Ovary (tissue), 10 donors: ENCODE measurements at regions of chr13 and their contacts with region 1.

Region 1: DNA sequence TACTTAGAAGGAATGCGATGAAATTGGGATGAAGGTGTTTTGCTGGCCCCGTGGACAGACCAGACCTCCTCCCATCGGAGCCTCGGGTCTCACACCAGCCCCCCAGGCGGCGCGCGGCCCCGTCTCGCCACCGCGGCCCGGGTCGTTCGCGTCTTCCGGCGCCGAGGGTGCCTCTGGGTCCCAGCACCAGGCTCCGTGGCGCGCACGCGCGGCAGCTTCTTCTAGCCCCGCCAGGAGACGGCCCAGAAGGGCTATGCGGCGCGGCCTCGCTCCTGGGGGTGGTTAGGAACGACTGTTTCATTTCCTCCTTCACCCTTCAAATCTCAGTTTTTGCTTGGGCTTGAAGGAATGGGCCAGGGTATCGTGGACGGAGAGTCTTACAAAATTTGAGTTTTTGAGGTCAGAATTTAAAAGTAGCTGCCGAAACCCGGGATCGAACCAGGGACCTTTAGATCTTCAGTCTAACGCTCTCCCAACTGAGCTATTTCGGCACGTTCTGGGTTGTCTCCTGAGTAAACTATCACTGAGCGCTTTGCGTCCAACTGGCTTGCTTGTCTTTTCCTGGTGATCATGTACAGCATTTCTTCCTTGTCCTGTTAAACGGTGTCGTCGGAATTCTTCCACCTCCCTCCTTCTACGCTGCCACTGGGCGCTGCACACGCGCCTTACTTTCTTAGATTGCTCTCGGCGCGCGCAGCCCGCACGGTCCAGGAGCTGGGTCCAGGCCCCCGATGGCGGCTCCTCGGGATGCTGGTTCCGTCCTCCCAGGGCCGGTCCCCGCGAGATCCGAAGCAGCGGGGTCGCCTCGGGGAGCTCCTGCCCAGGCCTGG is 46.5 kb downstream of the TGDS start:
- DNase-seq: peak; percentile 90 to 94 (median 93)
- H3K4me3 ChIP-seq: peak overlapping the region; percentile 79
- H3K27ac ChIP-seq: peak overlapping the region; percentile 85 to 98
- H3K4me1 ChIP-seq: no peaks in the 10 kb centered on the region
- H3K27me3 ChIP-seq: no peaks in the 10 kb centered on the region
- CTCF ChIP-seq: peak in 1 of 3 donors; percentile 18
- EP300 ChIP-seq: no peak
- POLR2A ChIP-seq: peak; percentile 29

Region 2: DNA sequence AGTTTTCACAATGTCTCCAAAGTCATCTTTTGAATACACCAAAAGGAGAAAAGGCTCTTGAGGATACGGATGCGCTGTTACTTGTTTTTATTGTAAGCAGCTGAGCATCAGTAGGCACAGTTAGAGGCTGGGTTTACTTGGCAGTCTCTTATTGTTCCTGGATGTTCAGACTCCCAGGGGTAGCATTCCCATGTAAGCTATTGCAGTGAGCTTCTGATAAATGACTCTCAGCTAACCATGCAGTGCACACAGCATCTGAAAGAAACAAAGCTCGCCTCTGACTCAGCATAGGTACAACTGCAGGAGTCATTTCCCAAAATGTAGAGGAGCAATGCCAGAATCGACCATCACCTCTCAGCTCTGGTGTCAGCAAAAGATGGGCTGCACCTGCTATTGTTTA is 154.7 kb before region 1 on chr13:
- intact Hi-C with region 1: no loop called
- DNase-seq: no peak
- H3K4me3 ChIP-seq: no peak overlapping the region
- H3K27ac ChIP-seq: no peak overlapping the region
- H3K4me1 ChIP-seq: no peaks in the 10 kb centered on the region
- H3K27me3 ChIP-seq: no peaks in the 10 kb centered on the region
- CTCF ChIP-seq: no peak
- EP300 ChIP-seq: no peak
- POLR2A ChIP-seq: no peak

Region 3: GRCh38 chr13:94480672-94481145 is 68.7 kb before region 1 on chr13:
- intact Hi-C with region 1: no loop called
- DNase-seq: no peak
- H3K4me3 ChIP-seq: no peak overlapping the region
- H3K27ac ChIP-seq: no peak overlapping the region
- H3K4me1 ChIP-seq: no peaks in the 10 kb centered on the region
- H3K27me3 ChIP-seq: no peaks in the 10 kb centered on the region
- CTCF ChIP-seq: no peak
- EP300 ChIP-seq: no peak
- POLR2A ChIP-seq: no peak

Region 4: GRCh38 chr13:94494021-94494420 is 55.4 kb before region 1 on chr13:
- intact Hi-C with region 1: no loop called
- DNase-seq: no peak
- H3K4me3 ChIP-seq: no peak overlapping the region
- H3K27ac ChIP-seq: no peak overlapping the region
- H3K4me1 ChIP-seq: no peaks in the 10 kb centered on the region
- H3K27me3 ChIP-seq: no peaks in the 10 kb centered on the region
- CTCF ChIP-seq: no peak
- EP300 ChIP-seq: no peak
- POLR2A ChIP-seq: no peak

Region 5: GRCh38 chr13:94579063-94579462 is 29.6 kb after region 1 on chr13:
- intact Hi-C with region 1: no loop called
- DNase-seq: no peak
- H3K4me3 ChIP-seq: no peak overlapping the region
- H3K27ac ChIP-seq: no peak overlapping the region
- H3K4me1 ChIP-seq: no peaks in the 10 kb centered on the region
- H3K27me3 ChIP-seq: no peaks in the 10 kb centered on the region
- CTCF ChIP-seq: no peak
- EP300 ChIP-seq: no peak
- POLR2A ChIP-seq: no peak

Region 6: DNA sequence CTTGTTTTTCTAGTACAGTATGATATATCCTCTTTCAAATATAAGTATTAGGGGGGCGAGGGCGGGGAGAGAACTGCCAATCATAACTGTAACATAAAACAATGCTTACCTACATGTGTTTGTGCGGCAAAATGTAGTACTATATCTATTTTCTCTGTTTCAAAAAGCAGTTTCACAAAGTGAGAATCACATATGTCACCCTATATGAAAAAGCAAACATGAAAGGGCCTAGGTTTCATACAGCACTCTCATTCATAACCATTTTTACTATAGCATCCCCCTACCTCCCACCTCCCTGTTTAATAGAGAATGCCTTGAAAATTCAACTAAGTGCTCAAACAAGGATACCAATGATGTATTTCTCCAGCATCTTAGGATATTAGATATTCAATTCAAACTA is 41.3 kb after region 1 on chr13:
- intact Hi-C with region 1: loop called in 1 of 4 experiments (anchors 5 kb)
- DNase-seq: no peak
- H3K4me3 ChIP-seq: no peak overlapping the region
- H3K27ac ChIP-seq: no peak overlapping the region
- H3K4me1 ChIP-seq: peaks cover 8% of the 10 kb centered on the region
- H3K27me3 ChIP-seq: no peaks in the 10 kb centered on the region
- CTCF ChIP-seq: no peak
- EP300 ChIP-seq: no peak
- POLR2A ChIP-seq: no peak